PC-3 (cell line): ENCODE measurements at regions of chr3 and their contacts with region 1.

Region 1: DNA sequence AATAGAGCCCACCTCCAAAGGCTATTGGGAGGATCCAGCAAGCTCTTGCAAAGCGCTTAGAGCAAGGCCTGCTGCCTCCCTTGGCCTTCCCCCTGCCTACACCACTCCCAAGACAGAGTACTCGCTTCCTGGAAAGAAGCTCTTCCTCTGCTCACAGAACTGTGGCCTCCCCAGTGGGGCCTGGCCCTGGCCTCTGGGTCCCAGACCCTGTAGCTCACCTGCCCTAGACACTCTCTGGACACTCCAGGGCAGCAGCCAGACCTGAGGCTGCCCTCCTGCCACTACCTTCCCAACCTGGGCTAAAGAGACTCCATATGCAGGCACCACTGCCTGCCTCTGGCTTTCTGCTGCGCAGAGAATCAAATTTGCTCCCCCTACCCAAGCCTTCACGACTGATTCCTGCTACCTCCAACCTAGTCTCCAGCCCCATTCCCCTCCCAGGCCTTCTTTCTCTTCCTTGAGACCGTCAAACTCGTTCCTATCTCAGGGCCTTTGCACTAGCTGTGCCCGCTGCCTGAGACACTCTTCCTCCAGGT is 49.8 kb downstream of the GRIP2 start:
- DNase-seq: no peak
- ATAC-seq: peak; percentile 25
- H3K4me3 ChIP-seq: no peak overlapping the region
- H3K27ac ChIP-seq: peak overlapping the region; percentile 35
- H3K4me1 ChIP-seq: peaks cover 17% of the 10 kb centered on the region
- H3K27me3 ChIP-seq: no peaks in the 10 kb centered on the region
- CTCF ChIP-seq: no peak

Region 2: DNA sequence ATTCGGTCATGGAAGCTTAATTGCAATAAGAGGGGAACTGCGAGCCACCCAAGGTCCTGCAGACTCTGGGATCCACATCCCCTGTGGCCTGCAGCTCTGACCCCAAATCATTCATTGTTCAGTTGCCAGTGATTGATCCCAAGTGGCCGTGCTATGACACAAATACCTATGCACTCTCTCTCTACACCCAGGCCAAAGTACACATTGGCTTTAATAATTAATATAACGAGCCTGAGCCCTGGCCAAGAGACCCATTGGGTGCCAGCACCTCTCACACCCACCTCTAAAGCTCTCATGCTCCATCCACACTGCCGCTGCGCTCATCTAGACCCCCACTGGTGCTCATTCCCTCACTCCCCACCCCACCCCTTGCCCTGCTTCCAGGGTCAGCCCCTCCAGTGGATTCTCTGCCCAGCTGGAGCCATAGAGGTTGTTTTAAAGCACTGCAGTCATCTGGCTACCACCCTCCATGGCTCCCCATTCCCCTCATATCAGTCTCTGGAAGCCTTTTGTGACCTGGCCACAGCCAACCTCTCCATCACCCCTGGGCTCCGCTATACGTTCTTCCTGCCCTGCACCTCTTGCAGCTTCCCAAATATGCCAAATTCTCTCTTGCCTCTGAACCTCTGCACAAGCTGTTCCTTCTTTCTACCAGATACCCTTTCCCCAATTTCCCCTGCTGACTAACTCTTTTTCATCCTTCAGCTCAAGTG is 125.6 kb before region 1 on chr3:
- CTCF ChIA-PET with region 1: no interaction called
- POLR2A ChIA-PET with region 1: no interaction called
- intact Hi-C with region 1: no loop called
- DNase-seq: no peak
- ATAC-seq: no peak
- H3K4me3 ChIP-seq: no peak overlapping the region
- H3K27ac ChIP-seq: no peak overlapping the region
- H3K4me1 ChIP-seq: 0 out of 2 replicates have a peak, but pooled peaks cover 1% of the 10 kb centered on the region
- H3K27me3 ChIP-seq: no peaks in the 10 kb centered on the region
- CTCF ChIP-seq: no peak

Region 3: DNA sequence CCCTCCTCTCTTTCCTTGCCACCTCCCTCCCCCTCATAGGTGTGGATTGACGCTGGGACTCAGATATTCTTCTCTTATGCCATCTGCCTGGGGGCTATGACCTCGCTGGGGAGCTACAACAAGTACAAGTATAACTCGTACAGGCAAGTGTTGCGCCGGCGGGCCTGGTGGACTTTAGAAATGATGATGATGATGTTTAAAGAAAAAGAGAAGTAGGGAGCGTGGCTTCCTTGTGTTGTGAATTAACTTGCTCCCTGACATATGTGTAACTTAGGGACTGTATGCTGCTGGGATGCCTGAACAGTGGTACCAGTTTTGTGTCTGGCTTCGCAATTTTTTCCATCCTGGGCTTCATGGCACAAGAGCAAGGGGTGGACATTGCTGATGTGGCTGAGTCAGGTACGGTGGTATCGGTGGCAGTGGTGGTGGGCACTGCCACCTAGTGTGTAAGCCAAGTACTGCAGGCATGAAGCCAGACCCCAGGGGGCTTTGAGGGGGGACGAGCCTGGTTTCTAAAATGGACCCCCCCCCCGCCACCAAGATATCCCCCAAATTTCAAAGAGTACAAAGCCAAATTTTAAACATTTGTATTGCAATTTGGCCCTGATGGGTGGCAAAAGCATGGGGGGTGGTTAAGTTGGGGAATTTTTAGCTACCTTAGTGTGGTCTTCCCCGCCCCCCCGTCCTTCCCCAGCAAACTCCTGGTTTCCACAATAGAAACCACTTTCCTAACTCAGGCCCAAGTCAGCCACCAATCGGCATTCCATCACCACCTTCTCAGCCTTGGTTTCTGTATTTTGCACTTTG is 22.3 kb before region 1 on chr3:
- CTCF ChIA-PET with region 1: no interaction called
- POLR2A ChIA-PET with region 1: interaction called, 14 read pairs
- intact Hi-C with region 1: no loop called
- DNase-seq: peak; percentile 50
- ATAC-seq: peak; percentile 23
- H3K4me3 ChIP-seq: no peak overlapping the region
- H3K27ac ChIP-seq: no peak overlapping the region
- H3K4me1 ChIP-seq: peaks cover 14% of the 10 kb centered on the region
- H3K27me3 ChIP-seq: no peaks in the 10 kb centered on the region
- CTCF ChIP-seq: peak; percentile 90

Region 4: DNA sequence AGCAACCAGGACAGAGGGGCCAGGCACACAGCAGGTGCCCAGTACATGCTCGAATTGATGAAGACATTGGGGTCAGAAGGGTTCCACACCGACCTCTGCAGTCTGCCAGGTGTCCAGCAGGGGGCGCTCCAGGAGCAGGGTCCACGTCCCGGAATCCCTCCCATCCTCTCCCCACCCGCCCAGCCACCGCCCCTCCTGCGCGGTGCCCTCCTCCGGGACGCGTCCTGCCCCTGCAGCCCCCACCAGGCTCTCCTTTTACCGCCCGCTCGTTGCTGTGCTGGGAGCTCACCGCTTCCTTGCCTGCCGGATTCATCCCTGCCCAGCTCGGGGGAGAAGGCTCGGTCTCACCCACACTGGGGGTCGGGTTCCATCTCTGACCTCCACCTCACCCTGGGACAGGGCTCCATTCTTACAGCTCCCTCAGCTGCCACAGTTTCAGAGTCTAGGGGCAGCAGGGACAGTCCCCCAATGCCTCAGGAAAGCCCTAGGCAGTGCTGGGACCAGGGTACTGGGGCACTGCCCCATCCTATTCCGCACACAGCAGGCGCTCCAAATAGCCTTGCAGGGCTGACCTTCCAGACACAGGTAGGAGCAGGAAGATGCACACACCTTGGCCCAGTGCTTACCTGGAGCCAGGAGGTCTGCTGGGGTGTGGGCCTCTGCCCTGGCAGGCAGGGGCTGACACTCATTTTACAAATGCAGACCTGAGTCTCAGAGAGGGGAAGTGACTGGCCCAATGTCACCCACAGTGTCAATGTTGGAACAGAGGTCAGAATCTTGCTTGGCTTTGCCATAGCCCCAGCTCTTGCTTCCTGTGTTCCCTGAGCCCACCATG is 18.9 kb after region 1 on chr3:
- CTCF ChIA-PET with region 1: no interaction called
- POLR2A ChIA-PET with region 1: no interaction called
- intact Hi-C with region 1: no loop called
- DNase-seq: peak; percentile 80
- ATAC-seq: peak; percentile 89
- H3K4me3 ChIP-seq: peak overlapping the region; percentile 51; the same call in 1 of the 2 replicates
- H3K27ac ChIP-seq: no peak overlapping the region
- H3K4me1 ChIP-seq: no peaks in the 10 kb centered on the region
- H3K27me3 ChIP-seq: no peaks in the 10 kb centered on the region; the same call in 1 of the 2 replicates
- CTCF ChIP-seq: peak; percentile 80